Activated CD4-positive, alpha-beta memory T cell treated with anti-CD3 and anti-CD28 coated beads, Interleukin-2, amount 10 ng/mL, durations not matched to agents 7 days and 5 days (primary cell): ENCODE measurements at regions of chr6 and their contacts with region 1.

Region 1: GRCh38 chr6:2841264-2842138 is at the start of gene SERPINB1:
- DNase-seq: peak; percentile 88
- H3K4me3 Mint-ChIP-seq: peak within 1 kb of the TSS; percentile 84
- H3K27ac Mint-ChIP-seq: peak within 1 kb of the TSS; percentile 86
- H3K4me1 Mint-ChIP-seq: peaks cover 66% of the 10 kb centered on the region
- H3K27me3 Mint-ChIP-seq: no peaks in the 10 kb centered on the region
- total RNA-seq, gene SERPINB1: 85.0 to 86.5 TPM

Region 2: GRCh38 chr6:2791124-2791974 is 50.2 kb before region 1 on chr6:
- CTCF ChIA-PET with region 1: interaction called, 38 read pairs
- POLR2A ChIA-PET with region 1: interaction called, 18 read pairs
- DNase-seq: peak; percentile 71
- H3K4me3 Mint-ChIP-seq: no peak overlapping the region
- H3K27ac Mint-ChIP-seq: peak overlapping the region; percentile 57
- H3K4me1 Mint-ChIP-seq: peaks cover 41% of the 10 kb centered on the region
- H3K27me3 Mint-ChIP-seq: no peaks in the 10 kb centered on the region

Region 3: DNA sequence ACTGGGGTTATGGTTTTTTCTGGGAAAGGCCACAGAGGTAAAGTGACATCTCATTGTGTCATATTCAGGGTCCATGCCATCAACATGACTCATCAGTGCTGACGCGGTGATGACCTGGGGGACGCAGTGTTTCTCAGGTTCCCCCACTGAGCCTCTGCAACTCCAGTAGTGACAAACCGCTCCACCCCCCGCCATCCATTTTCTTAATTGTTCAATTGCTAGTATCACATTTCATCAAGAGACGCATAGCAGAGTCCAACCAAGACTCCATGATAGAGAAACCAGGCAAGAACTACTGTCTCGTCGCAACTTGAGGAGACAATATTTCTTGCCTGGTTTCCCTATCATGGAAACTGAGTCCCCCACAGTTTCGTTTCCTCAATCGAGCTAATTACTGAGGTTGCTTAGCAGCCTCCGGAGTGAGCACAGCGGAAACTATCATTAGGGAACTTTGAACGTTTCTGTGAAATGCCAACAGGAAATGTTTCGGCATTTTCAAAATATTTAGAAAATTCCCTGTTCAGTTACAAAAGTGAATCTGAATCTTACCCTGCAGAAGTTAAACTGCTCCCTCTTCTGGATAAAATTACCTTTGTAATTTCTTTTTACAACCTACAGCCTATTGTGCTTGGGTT is 12.4 kb after region 1 on chr6:
- CTCF ChIA-PET with region 1: interaction called, 29 read pairs
- POLR2A ChIA-PET with region 1: interaction called, 53 read pairs
- DNase-seq: peak; percentile 85
- H3K4me3 Mint-ChIP-seq: peak overlapping the region; percentile 70
- H3K27ac Mint-ChIP-seq: peak overlapping the region; percentile 100
- H3K4me1 Mint-ChIP-seq: peaks cover 70% of the 10 kb centered on the region
- H3K27me3 Mint-ChIP-seq: no peaks in the 10 kb centered on the region

Region 4: DNA sequence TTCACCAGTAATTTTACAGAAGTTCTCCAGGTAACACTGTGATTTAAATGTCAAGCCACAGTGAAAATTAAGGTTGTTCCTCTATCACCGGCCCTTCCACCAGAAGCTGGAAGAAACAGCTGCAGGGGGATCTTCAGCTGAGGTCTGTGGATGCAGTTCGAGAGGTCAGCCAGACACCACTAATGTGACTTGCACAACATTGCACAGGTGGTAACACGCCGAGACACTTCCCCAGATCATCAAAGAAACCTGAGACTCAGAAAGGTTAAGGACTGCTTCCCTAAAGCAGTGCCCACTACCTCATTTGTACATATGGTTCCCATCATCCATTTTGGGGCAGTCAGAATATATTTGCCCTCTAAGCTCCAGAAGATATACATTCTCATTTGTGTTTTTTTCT is 69.7 kb after region 1 on chr6:
- CTCF ChIA-PET with region 1: interaction called, 62 read pairs
- POLR2A ChIA-PET with region 1: interaction called, 6 read pairs
- DNase-seq: no peak
- H3K4me3 Mint-ChIP-seq: no peak overlapping the region
- H3K27ac Mint-ChIP-seq: no peak overlapping the region
- H3K4me1 Mint-ChIP-seq: peaks cover 22% of the 10 kb centered on the region
- H3K27me3 Mint-ChIP-seq: no peaks in the 10 kb centered on the region

Region 5: DNA sequence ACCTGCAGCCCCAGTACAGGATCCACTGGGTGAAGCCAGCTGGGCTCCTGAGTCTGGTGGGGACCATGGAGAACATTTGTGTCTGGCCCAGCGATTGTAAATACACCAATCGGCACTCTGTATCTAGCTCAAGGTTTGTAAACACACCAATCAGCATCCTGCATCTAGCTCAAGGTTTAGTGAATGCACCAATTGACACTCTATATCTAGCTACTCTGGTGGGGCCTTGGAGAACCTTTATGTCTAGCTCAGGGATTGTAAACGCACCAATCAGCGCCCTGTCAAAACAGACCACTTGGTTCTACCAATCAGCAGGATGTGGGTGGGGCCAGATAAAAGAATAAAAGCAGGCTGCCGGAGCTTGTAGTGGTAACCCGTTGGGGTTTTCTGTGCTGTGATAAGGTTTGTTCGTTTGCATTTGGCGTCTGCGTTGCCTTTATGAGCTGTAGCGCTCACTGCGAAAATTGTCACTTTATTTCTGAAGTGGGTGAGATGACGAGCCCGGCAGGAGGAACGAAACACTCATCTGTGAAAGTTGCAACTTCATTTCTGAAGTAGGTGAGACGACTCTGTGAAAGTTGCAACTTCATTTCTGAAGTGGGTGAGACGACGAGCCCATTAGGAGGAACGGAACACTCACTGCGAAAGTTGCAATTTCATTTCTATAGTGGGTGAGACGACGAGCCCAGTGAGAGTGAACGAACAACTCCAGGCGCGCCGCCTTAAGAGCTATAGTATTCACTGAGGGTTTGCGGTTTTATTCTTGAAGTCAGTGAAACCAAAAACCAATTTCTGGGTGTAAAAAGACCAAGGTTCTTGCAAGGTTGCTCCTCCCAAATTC is 98.7 kb after region 1 on chr6:
- CTCF ChIA-PET with region 1: interaction called, 170 read pairs
- POLR2A ChIA-PET with region 1: interaction called, 13 read pairs
- DNase-seq: peak; percentile 81
- H3K4me3 Mint-ChIP-seq: peak overlapping the region; percentile 69
- H3K27ac Mint-ChIP-seq: peak overlapping the region; percentile 94
- H3K4me1 Mint-ChIP-seq: peaks cover 57% of the 10 kb centered on the region
- H3K27me3 Mint-ChIP-seq: peaks cover 31% of the 10 kb centered on the region